ENCODE measurements at regions of chr1 and their contacts with region 1.

Region 1: GRCh38 chr1:211323156-211324063 is 3.2 kb upstream of the TRAF5 start:
- DNase-seq: no peak
- H3K4me3 ChIP-seq: no peak overlapping the region
- H3K27ac ChIP-seq: no peak overlapping the region
- H3K4me1 ChIP-seq: peaks cover 3% of the 10 kb centered on the region
- H3K27me3 ChIP-seq: no peaks in the 10 kb centered on the region
- CTCF ChIP-seq: peak in 2 of 3 donors; percentile 32 to 38
- EP300 ChIP-seq: no peak
- POLR2A ChIP-seq: no peak

Region 2: GRCh38 chr1:211378844-211379243 is 55.4 kb after region 1 on chr1:
- intact Hi-C with region 1: loop called in 1 of 4 experiments (anchors 5 kb)
- DNase-seq: no peak
- H3K4me3 ChIP-seq: no peak overlapping the region
- H3K27ac ChIP-seq: no peak overlapping the region
- H3K4me1 ChIP-seq: no peaks in the 10 kb centered on the region
- H3K27me3 ChIP-seq: no peaks in the 10 kb centered on the region
- CTCF ChIP-seq: no peak
- EP300 ChIP-seq: no peak
- POLR2A ChIP-seq: no peak

Region 3: GRCh38 chr1:212328248-212328647 is 1004.8 kb after region 1 on chr1:
- intact Hi-C with region 1: no loop called
- DNase-seq: no peak
- H3K4me3 ChIP-seq: no peak overlapping the region
- H3K27ac ChIP-seq: no peak overlapping the region
- H3K4me1 ChIP-seq: no peaks in the 10 kb centered on the region
- H3K27me3 ChIP-seq: no peaks in the 10 kb centered on the region
- CTCF ChIP-seq: no peak
- EP300 ChIP-seq: no peak
- POLR2A ChIP-seq: no peak

Measured in ovary (tissue), 10 donors.